Right ventricle myocardium inferior (tissue), 1 donor: ENCODE measurements at regions of chr12 and their contacts with region 1.

Region 1: DNA sequence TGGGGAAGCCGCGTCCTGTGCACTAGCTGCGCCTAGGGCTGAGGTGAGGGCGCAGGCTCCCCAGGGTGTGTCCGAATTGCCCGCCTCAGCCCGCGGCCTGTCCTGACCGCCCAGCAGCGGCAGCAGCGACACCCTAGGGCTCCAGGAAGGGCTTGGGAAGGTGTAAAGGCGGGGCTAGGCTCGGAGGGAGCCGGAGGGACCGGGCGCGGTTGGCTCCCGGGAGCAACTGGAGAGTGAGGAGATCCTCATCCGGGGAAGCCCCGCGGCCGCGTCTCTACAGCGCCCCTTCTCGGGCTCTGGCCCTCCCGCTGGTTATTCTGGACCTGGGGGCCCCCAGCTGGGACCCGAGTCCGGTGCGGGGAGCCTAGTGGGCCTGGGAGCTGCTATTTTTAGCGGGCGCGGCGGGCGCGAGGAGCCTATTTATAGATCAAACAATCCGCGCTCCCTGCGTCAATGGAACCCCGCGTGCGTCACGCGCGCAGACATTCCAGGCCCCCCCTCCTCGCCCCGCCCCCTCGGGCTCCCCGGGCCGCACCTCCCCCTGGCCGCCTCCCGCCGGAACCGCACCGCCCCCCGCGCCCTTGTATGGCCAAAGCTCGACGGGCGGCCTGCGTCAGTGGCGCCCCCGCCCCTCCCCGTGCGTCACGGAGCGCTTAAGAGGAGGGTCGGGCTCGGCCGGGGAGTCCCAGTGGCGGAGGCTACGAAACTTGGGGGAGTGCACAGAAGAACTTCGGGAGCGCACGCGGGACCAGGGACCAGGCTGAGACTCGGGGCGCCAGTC is at the start of gene NR4A1:
- DNase-seq: peak; percentile 99
- ATAC-seq: peak; percentile 91
- total RNA-seq, gene NR4A1: 40.6 TPM

Region 2: GRCh38 chr12:50201978-50202521 is 1848.9 kb before region 1 on chr12:
- intact Hi-C with region 1: no loop called
- DNase-seq: no peak
- ATAC-seq: no peak

Region 3: DNA sequence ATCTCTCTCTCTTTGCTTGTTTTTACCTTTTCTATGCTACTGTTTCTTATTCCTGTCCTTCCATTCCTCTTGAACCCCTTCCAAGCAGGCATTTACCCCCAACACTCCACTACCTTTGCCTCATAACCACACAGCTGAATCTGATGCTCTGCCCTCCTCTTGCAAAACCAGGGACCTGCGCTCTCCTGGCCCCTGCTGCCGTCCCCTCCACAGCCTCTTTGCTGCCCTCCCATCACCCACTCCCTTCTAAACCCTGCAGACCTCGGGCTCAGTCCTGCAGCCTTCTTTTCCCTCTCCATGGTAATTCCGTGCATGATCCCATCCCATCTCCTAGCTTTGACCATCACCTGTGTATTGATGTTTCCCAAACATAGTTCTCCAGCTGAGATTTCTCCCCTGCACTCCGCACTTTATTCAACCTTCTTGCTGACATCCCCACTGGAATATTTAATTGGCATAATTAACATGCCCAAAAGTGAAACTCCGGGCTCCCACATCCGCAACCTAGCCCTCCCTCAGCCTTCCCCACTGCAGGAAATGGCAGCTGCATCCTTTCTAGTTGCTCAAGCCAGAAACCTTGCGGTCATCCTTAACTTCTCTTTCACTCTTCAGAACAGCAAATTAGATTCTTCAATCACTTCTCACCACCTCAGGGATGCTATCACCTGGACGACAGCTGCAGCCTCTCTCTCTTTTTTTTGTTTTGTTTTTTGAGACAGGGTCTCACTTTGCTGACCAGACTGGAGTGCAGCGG is 218.4 kb before region 1 on chr12:
- intact Hi-C with region 1: no loop called
- DNase-seq: no peak
- ATAC-seq: no peak

Region 4: DNA sequence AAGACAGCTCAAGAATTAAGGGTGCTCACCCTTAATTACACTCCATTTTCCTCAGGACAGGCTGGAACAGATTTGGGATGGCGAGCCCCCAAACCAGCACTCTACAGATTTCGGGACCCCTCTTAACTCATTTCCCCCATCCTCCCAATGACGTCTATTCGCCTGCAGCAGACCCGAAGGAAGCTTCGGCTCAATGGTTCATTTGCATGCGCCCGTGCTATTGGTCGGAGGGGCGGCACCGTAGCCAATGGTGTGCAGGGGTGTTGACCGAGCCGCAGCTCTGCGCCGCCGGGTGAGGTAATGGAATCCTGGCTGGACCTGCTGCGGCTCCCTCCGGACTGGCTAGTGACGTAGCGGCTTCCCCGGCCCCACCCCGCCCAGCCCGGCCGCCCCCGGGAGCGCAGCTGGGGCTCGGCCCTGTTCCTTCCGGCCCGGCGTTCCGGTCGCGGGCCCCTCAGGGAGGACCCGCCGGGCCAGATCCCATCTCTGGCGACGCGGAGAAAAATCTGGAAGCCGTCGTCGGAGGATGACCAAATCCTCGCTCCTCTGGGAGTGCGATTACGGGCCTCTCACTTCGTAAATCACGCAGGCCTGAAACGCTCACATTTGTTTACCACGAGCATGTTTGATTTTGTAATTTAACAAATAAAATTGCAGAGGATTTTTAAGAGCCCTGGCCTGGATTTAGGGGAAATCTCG is 18.0 kb before region 1 on chr12:
- intact Hi-C with region 1: loop called (anchors 2 kb)
- DNase-seq: peak; percentile 99
- ATAC-seq: peak; percentile 93

Region 5: GRCh38 chr12:52069327-52070184 is 18.6 kb after region 1 on chr12 and contains the start of gene ATG101:
- intact Hi-C with region 1: loop called (anchors 1 kb)
- DNase-seq: peak; percentile 93
- ATAC-seq: peak; percentile 99
- total RNA-seq, gene ATG101: 24.9 TPM